ENCODE measurements at regions of chr1 and their contacts with region 1.

Region 1: DNA sequence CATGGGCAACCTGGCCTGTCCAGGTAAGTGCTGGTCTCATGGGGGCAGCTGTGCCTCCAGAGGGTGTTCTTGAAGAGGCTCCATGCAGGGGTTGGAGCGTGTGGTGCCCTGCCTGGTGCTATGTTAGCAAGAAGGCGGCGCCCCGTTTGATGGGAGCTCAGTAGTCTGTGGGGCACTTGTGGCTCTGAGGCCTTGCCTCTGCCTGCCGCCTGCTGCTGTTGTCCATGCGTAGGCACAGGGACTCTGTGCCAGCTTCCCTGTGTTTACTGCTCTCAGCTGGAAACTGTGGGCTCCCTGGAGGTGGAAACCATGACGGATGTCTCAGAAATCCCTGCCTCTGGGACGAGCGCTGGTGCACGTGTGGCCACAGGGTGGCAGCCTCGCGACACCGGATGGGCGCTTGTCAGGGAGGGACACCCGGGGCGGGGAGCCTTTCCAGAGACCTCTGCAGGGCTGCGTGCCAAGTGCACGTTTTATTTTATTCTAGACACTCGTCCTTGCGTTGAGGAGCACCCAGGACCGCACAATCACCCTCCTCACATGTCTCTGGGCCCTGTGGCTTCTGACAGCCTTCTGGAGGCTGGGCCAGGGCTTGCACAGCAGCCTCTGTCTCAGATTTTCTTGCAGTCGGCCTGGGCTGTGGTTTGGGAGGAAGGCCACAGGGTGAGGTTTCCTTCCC is 27.1 kb downstream of the SNAP47 start:
- DNase-seq: peak; percentile 93
- H3K4me3 Mint-ChIP-seq: no peak overlapping the region
- H3K27ac Mint-ChIP-seq: no peak overlapping the region
- H3K4me1 Mint-ChIP-seq: peaks cover 74% of the 10 kb centered on the region
- H3K27me3 Mint-ChIP-seq: no peaks in the 10 kb centered on the region
- CTCF ChIP-seq: peak; percentile 99

Region 2: GRCh38 chr1:227728059-227728891 is 34.1 kb before region 1 on chr1:
- CTCF ChIA-PET with region 1: interaction called, 12 read pairs
- POLR2A ChIA-PET with region 1: interaction called, 7 read pairs
- intact Hi-C with region 1: loop called (anchors 2 kb)
- DNase-seq: peak; percentile 97
- H3K4me3 Mint-ChIP-seq: peak overlapping the region; percentile 93
- H3K27ac Mint-ChIP-seq: peak overlapping the region; percentile 55
- H3K4me1 Mint-ChIP-seq: peaks cover 46% of the 10 kb centered on the region
- H3K27me3 Mint-ChIP-seq: no peaks in the 10 kb centered on the region
- CTCF ChIP-seq: no peak

Region 3: GRCh38 chr1:227774821-227775661 is 12.7 kb after region 1 on chr1:
- CTCF ChIA-PET with region 1: interaction called, 22 read pairs
- POLR2A ChIA-PET with region 1: interaction called, 5 read pairs
- intact Hi-C with region 1: no loop called
- DNase-seq: no peak
- H3K4me3 Mint-ChIP-seq: no peak overlapping the region
- H3K27ac Mint-ChIP-seq: no peak overlapping the region
- H3K4me1 Mint-ChIP-seq: no peaks in the 10 kb centered on the region
- H3K27me3 Mint-ChIP-seq: no peaks in the 10 kb centered on the region
- CTCF ChIP-seq: no peak

Region 4: GRCh38 chr1:227793948-227794816 is 31.8 kb after region 1 on chr1:
- CTCF ChIA-PET with region 1: interaction called, 15 read pairs
- POLR2A ChIA-PET with region 1: interaction called, 5 read pairs
- intact Hi-C with region 1: no loop called
- DNase-seq: peak; percentile 87
- H3K4me3 Mint-ChIP-seq: no peak overlapping the region
- H3K27ac Mint-ChIP-seq: peak overlapping the region; percentile 44
- H3K4me1 Mint-ChIP-seq: peaks cover 7% of the 10 kb centered on the region
- H3K27me3 Mint-ChIP-seq: peaks cover 10% of the 10 kb centered on the region
- CTCF ChIP-seq: no peak

Region 5: DNA sequence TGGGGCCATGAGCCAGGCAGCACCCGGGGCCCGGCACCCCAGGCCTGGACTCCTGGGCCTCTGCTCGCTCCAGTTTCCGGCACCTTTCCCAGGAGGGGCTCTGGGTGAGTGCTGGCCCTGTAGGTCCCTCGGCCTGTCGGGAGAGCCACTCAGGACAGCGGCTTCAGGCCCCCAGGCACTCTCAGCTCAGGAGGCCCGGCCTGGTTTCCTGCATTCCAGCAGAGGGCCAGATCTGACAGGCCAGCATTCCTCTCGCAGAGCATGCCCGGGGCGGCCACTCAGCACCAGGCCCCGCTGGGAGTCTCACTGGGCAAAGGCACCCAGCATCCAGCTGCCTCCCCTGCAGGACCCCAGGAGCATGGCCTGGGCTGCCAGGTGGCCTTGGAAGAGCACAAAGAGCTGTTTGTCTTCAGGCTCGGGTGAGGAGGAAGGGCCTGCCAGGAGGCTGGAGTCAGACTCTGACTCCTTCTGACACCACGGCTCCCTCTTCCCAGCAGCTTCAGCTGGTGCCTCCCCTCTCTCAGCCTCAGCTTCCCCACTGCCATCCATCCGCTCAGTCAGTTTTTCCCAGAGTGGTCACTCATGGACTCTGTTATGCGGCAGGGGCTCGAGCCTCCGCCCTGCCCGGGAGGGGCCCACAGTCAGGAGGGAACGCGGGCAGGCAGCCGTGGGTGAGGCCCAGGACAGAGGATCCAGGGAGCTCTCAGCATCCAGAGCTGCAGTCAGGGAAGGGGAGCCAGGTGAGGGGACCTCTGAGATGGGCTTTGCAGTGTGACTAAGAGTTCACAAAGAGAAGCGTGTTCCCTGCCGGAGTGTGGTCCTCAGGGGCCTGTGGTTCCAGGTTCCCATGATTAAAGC is 133.7 kb after region 1 on chr1:
- CTCF ChIA-PET with region 1: no interaction called
- POLR2A ChIA-PET with region 1: no interaction called
- intact Hi-C with region 1: no loop called
- DNase-seq: no peak
- H3K4me3 Mint-ChIP-seq: no peak overlapping the region
- H3K27ac Mint-ChIP-seq: no peak overlapping the region
- H3K4me1 Mint-ChIP-seq: peaks cover 18% of the 10 kb centered on the region
- H3K27me3 Mint-ChIP-seq: peaks cover 13% of the 10 kb centered on the region
- CTCF ChIP-seq: no peak

Region 6: DNA sequence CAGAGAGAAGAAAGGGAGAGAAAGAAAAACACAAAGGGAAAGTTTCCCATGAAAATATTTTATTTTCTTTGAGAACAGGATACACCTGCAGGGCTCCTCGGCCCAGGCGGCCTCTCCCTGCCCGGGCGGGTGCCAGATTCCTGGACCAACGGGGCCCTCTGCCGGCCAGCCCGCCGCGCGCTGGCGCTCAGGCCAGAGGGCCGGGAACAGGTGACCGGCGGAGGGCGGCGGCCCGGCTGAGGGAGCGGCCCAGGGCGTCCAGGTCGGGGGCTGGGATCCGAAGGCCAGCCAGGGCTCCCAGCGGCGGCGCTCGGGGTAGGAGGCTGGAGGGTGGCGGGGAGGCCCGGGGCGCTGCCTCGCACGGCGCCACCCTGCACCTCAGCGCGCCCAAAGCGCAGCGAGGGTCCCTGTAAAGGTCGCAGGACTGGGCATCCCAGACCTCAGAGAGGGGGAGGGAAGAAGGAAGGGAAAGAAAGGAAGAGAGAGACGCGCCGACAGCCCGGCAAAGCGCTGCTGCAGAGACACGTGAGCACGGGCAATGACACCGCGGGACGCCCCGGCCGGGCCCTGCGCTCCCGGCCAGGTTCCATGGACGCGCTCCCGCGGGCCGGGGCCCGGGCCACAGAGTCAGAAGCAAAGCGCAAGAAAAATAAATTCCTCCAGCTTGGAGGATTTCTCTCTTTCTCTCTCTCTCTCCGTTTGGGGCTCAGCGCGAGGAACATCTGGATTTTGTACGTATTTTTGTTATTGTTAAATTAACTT is 184.4 kb after region 1 on chr1:
- CTCF ChIA-PET with region 1: interaction called, 79 read pairs
- POLR2A ChIA-PET with region 1: interaction called, 38 read pairs
- intact Hi-C with region 1: loop called (anchors 1 kb)
- DNase-seq: peak; percentile 96
- H3K4me3 Mint-ChIP-seq: peak overlapping the region; percentile 66
- H3K27ac Mint-ChIP-seq: peak overlapping the region; percentile 86
- H3K4me1 Mint-ChIP-seq: peaks cover 14% of the 10 kb centered on the region
- H3K27me3 Mint-ChIP-seq: no peaks in the 10 kb centered on the region
- CTCF ChIP-seq: peak; percentile 98

Region 7: GRCh38 chr1:228073857-228074545 is 311.6 kb after region 1 on chr1:
- CTCF ChIA-PET with region 1: interaction called, 3 read pairs
- POLR2A ChIA-PET with region 1: no interaction called
- intact Hi-C with region 1: loop called (anchors 5 kb)
- DNase-seq: peak; percentile 74
- H3K4me3 Mint-ChIP-seq: no peak overlapping the region
- H3K27ac Mint-ChIP-seq: no peak overlapping the region
- H3K4me1 Mint-ChIP-seq: peaks cover 11% of the 10 kb centered on the region
- H3K27me3 Mint-ChIP-seq: peaks cover 2% of the 10 kb centered on the region
- CTCF ChIP-seq: peak; percentile 77

Region 8: DNA sequence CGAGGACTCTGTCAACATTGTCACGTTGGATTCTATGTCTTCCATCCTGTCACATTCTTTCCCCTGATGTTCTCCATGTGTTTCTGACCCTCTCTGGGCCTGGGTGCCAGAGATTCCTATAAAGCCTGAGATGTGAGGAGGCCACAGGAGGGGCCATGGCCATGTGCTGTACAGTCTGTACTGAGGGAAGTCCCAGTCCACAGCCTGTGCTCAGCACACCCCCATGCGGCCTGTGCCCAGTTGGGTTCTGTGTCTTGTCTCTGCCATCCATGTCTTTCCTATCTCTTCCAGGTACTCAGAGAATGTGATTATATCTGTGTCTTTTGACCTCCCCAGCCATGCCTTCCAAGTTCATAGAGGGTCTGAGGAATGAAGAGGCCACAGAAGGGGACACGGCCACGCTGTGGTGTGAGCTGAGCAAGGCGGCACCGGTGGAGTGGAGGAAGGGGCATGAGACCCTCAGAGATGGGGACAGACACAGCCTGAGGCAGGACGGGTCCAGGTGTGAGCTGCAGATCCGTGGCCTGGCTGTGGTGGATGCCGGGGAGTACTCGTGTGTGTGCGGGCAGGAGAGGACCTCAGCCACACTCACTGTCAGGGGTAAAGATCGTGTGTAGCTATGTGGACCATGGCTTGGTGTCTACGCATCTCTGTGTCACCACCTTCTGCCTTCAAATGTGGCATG is 531.6 kb after region 1 on chr1:
- CTCF ChIA-PET with region 1: no interaction called
- POLR2A ChIA-PET with region 1: no interaction called
- intact Hi-C with region 1: no loop called
- DNase-seq: no peak
- H3K4me3 Mint-ChIP-seq: no peak overlapping the region
- H3K27ac Mint-ChIP-seq: no peak overlapping the region
- H3K4me1 Mint-ChIP-seq: no peaks in the 10 kb centered on the region
- H3K27me3 Mint-ChIP-seq: no peaks in the 10 kb centered on the region
- CTCF ChIP-seq: no peak